ENCODE measurements at regions of chr1 and their contacts with region 1.

Region 1: DNA sequence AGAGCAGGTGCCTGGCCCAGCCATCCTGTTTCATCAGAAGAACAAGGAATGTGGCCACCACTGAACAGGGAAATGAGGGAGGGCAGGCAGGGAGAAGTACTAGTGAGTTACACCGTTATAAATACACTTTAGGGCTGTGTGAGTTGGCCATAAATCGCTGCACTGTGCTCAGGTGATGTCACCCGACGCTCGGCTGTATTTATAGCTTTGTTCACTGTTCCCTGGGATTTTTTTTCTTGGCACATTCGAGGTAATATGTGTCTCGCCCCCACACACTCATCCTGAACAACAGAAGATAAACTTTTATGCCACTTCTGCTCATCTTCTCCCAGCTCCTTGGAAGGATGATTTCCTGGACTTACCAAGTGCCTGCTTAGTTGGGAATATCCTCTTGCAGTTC is 9.0 kb upstream of the KIRREL1 start:
- DNase-seq: no peak
- H3K4me3 ChIP-seq: no peak overlapping the region
- H3K27ac ChIP-seq: no peak overlapping the region
- H3K4me1 ChIP-seq: peaks cover 0 to 6% (median 2%) of the 10 kb centered on the region in 4 donors
- H3K27me3 ChIP-seq: no peaks in the 10 kb centered on the region
- CTCF ChIP-seq: no peak
- EP300 ChIP-seq: no peak
- POLR2A ChIP-seq: no peak

Region 2: DNA sequence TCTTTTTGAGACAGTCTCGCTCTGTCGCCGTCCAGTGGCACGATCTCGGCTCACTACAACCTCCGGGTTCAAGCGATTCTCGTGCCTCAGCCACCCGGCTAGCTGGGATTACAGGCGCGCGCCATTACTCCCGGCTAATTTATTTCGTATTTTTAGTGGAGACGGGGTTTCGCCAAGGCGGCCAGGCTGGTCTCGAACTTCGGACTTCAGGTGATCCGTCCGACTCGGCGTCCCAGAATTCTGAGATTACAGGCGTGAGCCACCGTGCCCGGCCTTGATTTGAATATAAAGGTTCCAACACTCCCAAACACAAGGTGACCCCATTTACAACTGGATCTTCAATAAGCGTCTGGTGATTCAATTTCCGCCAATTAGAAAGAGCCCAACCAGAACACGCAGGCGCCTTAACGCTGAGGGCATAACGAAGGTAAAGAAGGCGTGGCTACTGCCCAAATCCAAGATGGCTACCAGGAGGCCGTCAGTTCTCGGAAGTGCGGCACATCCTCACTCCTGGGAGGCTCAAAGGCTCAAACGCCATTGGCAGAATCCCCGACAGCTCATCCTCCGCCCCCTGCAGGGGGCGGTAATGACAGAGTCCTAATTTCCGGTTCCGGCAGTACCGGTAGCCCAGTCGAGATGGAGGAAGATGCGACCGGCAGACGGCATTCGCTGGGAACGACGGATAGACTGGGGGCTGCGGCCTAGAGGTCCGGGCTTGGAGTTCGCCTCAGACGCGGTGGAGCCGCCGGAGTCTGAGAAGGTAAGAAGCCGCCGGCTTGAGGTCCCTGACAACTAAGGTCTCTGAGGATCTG is 1790.8 kb before region 1 on chr1 and contains the start of gene SLC25A44:
- in situ Hi-C with region 1: no loop called
- intact Hi-C with region 1: no loop called
- DNase-seq: peak; percentile 97
- H3K4me3 ChIP-seq: peak within 1 kb of the TSS; percentile 58 to 95 (median 87)
- H3K27ac ChIP-seq: peak within 1 kb of the TSS; percentile 82 to 91 (median 86)
- H3K4me1 ChIP-seq: peaks cover 4 to 31% (median 12%) of the 10 kb centered on the region in 4 donors
- H3K27me3 ChIP-seq: no peaks in the 10 kb centered on the region
- CTCF ChIP-seq: peak; percentile 37 to 75 (median 66)
- EP300 ChIP-seq: peak; percentile 44
- POLR2A ChIP-seq: peak; percentile 76
- total RNA-seq, gene SLC25A44: 9.6 to 19.9 (median 18.9) TPM

Region 3: DNA sequence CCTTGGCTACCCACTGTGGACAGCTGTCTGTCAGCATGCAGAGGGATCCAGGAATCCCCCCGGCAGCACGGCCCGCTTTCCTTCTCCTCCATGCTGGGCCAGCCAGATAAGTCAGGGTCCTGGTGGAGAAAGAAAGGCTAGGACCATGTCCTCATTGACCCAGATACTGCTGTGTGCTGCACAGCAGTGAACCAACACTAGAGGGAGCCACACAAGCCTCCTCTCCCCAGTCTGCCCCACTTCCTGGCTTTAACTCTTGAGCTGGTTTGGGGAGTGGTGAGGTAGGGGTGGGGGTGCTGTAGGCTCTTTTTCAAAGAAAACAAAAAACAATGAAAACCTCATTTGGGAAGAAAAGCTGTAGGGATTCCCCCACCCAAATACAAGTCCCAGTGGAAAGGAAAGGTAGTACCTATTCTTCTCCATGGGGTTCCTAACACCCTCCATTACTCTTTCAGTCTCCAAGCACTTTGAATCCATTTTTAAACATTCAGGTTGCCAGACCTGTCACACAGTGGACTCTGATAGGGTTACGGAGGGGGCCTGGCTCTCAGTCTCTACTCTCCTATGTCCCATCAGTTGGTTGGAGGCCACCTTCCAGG is 111.4 kb after region 1 on chr1:
- in situ Hi-C with region 1: loop called in 3 of 4 experiments (anchors 10 to 25 kb)
- intact Hi-C with region 1: no loop called
- DNase-seq: peak; percentile 29
- H3K4me3 ChIP-seq: no peak overlapping the region
- H3K27ac ChIP-seq: no peak overlapping the region
- H3K4me1 ChIP-seq: no peaks in the 10 kb centered on the region
- H3K27me3 ChIP-seq: no peaks in the 10 kb centered on the region
- CTCF ChIP-seq: peak; percentile 53 to 73 (median 62)
- EP300 ChIP-seq: no peak
- POLR2A ChIP-seq: no peak

Region 4: GRCh38 chr1:158101927-158102326 is 117.5 kb after region 1 on chr1:
- in situ Hi-C with region 1: loop called in 3 of 4 experiments (anchors 10 to 25 kb)
- intact Hi-C with region 1: no loop called
- DNase-seq: no peak
- H3K4me3 ChIP-seq: no peak overlapping the region
- H3K27ac ChIP-seq: no peak overlapping the region
- H3K4me1 ChIP-seq: peaks cover 0 to 11% (median 0%) of the 10 kb centered on the region in 4 donors
- H3K27me3 ChIP-seq: peaks cover 8% of the 10 kb centered on the region
- CTCF ChIP-seq: no peak
- EP300 ChIP-seq: no peak
- POLR2A ChIP-seq: no peak

Measured in transverse colon (tissue), 4 donors.